ENCODE measurements at regions of chr7 and their contacts with region 1.

Region 1: DNA sequence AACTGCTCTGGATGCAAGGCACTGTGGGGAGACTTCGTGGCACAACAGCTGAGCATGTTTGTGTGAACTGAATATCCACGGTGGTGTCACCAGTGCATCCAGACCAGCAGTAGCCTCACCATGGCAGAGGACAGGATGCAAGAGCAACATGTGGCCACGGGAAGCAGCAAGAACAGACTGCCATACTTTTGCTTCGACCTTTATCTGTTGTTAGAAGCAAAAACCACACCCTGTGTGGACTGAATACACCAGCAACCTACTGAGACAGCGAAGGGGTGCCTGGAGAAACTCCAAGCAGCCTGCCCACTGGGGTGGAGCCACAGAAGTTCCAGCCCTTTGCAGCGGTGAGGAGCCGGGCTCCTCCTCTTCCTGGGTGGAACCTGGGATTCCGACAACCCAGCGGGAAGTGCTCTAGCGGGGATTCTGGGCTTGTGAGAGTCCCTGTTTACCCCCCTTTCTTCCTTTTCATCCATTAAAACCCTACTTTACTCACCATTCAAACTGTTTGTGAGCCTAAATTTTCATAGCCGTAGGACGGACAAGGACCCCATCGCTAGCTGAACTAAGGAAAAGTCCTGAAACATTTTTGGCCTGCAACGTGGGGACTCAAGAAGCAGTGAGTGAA is 584.9 kb downstream of the GRM8 start:
- DNase-seq: no peak
- H3K4me3 ChIP-seq: no peak overlapping the region
- H3K27ac ChIP-seq: no peak overlapping the region
- H3K4me1 ChIP-seq: no peaks in the 10 kb centered on the region
- H3K27me3 ChIP-seq: no peaks in the 10 kb centered on the region
- CTCF ChIP-seq: no peak

Region 2: GRCh38 chr7:126760914-126761577 is 93.2 kb after region 1 on chr7:
- CTCF ChIA-PET with region 1: no interaction called
- dilution Hi-C with region 1: loop called (anchors 5 kb)
- in situ Hi-C with region 1: no loop called
- intact Hi-C with region 1: no loop called
- DNase-seq: no peak
- H3K4me3 ChIP-seq: no peak overlapping the region
- H3K27ac ChIP-seq: no peak overlapping the region
- H3K4me1 ChIP-seq: no peaks in the 10 kb centered on the region
- H3K27me3 ChIP-seq: peaks cover 7% of the 10 kb centered on the region
- CTCF ChIP-seq: no peak

Measured in mammary epithelial cell (primary cell).